ENCODE measurements at regions of chr1 and their contacts with region 1.

Region 1: GRCh38 chr1:165933446-165934178 is 106.2 kb downstream of the UCK2 start:
- DNase-seq: no peak
- H3K4me3 ChIP-seq: no peak overlapping the region
- H3K27ac ChIP-seq: no peak overlapping the region
- H3K4me1 ChIP-seq: no peaks in the 10 kb centered on the region
- H3K27me3 ChIP-seq: 0 out of 2 replicates have a peak, but pooled peaks cover 3% of the 10 kb centered on the region

Region 2: DNA sequence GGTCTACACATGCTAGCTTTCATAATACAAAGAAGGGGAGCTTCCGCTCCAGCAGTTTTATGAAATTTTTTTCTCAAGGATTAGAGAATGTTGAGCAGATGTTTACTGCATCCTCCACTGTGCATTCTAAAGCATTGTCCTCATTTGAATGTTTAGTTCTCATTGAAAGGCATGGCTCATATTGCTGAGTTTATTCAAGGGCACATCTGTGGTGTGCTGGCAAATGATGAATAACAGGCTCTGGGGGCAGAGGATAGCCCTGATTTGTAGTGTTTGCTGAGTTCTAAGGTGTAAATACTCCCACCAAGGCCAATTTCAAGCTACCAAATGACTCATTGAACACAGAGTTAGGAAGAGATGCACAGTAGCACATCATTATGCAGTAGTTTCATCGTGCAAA is 536.4 kb after region 1 on chr1:
- in situ Hi-C with region 1: loop called (anchors 5 kb)
- DNase-seq: peak; percentile 3
- H3K4me3 ChIP-seq: no peak overlapping the region
- H3K27ac ChIP-seq: no peak overlapping the region
- H3K4me1 ChIP-seq: no peaks in the 10 kb centered on the region
- H3K27me3 ChIP-seq: no peaks in the 10 kb centered on the region